Sciatic nerve (tissue), 2 donors: ENCODE measurements at regions of chr15 and their contacts with region 1.

Region 1: DNA sequence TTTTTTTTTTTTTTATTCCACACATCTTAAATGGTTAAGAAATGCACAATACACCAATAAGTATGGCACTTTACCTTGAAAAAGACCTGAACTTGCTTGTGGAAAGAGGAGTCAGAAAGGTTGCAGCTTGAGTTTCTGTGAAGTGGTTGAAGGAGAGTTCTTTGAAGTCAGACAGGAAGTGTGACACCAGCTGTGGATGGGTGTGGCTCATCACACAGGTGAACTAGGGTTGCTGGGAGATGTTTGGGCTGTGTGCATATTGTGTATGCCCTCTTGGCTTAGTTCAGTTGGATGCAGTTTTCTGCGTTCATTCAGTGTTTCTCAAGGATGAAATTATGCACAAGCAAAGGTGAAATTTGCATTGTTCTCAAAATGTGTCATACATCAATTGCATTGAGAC is 6.3 kb downstream of the AEN start:
- DNase-seq: no peak
- ATAC-seq: no peak

Region 2: DNA sequence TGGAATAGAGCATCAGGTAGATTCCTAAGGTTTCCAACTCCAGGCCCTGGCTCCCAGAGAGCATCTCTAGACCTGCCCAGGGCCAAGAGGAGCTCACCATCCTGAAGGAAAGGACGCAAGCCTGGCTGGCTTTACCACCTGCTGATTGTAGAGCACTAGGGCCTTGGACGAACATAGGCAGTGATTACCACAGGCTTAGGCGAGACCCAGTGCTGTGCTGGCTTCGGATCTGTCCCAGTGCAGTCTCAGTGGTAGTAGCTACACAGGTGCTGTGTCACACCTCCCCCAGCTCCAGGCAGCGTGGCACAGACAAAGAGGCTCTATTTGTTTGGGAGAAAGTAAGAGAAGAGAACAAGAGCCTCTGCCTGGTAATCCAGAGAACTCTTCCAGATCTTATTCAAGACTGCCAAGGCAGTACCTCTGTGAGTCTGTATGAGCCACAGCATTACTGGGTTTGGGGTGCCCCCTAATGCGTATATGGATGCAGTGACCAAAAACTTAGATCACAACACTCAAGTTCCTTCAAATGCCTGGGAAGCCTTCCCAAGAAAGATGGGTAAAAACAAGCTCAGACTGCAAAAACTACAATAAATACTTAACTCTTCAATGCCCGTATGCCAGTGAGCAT is 36.8 kb after region 1 on chr15:
- intact Hi-C with region 1: loop called (anchors 5 kb)
- DNase-seq: peak; percentile 56
- ATAC-seq: peak; percentile 66